ENCODE measurements at regions of chr6 and their contacts with region 1.

Region 1: DNA sequence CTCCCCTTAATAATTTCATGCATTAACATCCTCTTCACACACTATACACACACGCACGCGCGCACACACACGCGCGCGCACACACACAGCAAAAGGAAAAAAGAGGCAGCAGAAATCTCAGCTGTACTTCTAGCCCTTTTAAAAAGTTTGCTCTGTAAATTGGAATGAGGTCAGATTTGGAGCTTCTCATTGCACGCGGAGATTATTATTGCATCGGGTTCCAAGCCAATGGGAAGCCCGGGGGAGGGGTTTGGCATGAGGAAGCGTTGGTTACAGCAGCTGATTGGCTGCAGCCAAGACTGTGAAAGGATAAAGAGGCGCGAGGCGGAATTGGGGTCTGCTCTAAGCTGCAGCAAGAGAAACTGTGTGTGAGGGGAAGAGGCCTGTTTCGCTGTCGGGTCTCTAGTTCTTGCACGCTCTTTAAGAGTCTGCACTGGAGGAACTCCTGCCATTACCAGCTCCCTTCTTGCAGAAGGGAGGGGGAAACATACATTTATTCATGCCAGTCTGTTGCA is at the start of gene SOX4:
- DNase-seq: peak; percentile 95 to 97
- H3K4me3 ChIP-seq: peak within 1 kb of the TSS; percentile 99
- H3K4me3 Mint-ChIP-seq: peak within 1 kb of the TSS; percentile 20
- H3K27ac Mint-ChIP-seq: no peak within 1 kb of the TSS
- H3K4me1 ChIP-seq: peaks cover 9% of the 10 kb centered on the region
- H3K4me1 Mint-ChIP-seq: peaks cover 6% of the 10 kb centered on the region
- H3K27me3 ChIP-seq: no peaks in the 10 kb centered on the region
- H3K27me3 Mint-ChIP-seq: no peaks in the 10 kb centered on the region
- CTCF ChIP-seq: no peak
- total RNA-seq, gene SOX4: 76.8 and 77.3 TPM in 2 replicates

Region 2: GRCh38 chr6:20939161-20939775 is 654.2 kb before region 1 on chr6:
- CTCF ChIA-PET with region 1: no interaction called
- POLR2A ChIA-PET with region 1: no interaction called
- intact Hi-C with region 1: loop called (anchors 5 kb)
- DNase-seq: no peak
- H3K4me3 ChIP-seq: no peak overlapping the region
- H3K4me3 Mint-ChIP-seq: no peak overlapping the region
- H3K27ac Mint-ChIP-seq: no peak overlapping the region
- H3K4me1 ChIP-seq: no peaks in the 10 kb centered on the region
- H3K4me1 Mint-ChIP-seq: peaks cover 8% of the 10 kb centered on the region
- H3K27me3 ChIP-seq: no peaks in the 10 kb centered on the region
- H3K27me3 Mint-ChIP-seq: no peaks in the 10 kb centered on the region
- CTCF ChIP-seq: no peak

Region 3: GRCh38 chr6:21360341-21360770 is 233.1 kb before region 1 on chr6:
- CTCF ChIA-PET with region 1: no interaction called
- POLR2A ChIA-PET with region 1: interaction called, 4 read pairs
- intact Hi-C with region 1: loop called (anchors 1 kb)
- DNase-seq: peak; percentile 70 to 81
- H3K4me3 ChIP-seq: no peak overlapping the region
- H3K4me3 Mint-ChIP-seq: peak overlapping the region; percentile 19
- H3K27ac Mint-ChIP-seq: no peak overlapping the region
- H3K4me1 ChIP-seq: peaks cover 23% of the 10 kb centered on the region
- H3K4me1 Mint-ChIP-seq: peaks cover 31% of the 10 kb centered on the region
- H3K27me3 ChIP-seq: no peaks in the 10 kb centered on the region
- H3K27me3 Mint-ChIP-seq: no peaks in the 10 kb centered on the region
- CTCF ChIP-seq: peak in 1 of 2 experiments; percentile 7

Region 4: DNA sequence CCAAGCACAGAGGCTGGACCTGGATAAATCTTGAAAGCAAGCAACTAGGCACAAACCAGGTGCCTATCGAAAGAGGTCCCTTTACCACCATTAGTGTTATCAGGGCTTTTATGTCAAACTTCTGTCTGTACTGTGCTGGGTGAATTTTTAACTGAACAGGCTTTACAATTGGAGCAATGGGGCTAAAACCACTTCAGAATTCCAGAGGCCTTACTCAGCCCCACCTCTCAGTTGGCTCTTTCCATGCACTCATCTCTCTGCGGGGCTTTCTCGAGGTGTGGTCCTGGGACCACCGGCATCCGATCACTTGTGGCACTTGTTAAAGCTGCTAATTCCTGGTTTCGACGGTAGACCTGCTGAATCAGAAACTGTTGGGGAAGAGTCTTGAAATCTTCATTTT is 232.6 kb after region 1 on chr6:
- CTCF ChIA-PET with region 1: interaction called, 3 read pairs
- POLR2A ChIA-PET with region 1: interaction called, 4 read pairs
- intact Hi-C with region 1: loop called (anchors 5 kb)
- DNase-seq: peak; percentile 59 to 65
- H3K4me3 ChIP-seq: no peak overlapping the region
- H3K4me3 Mint-ChIP-seq: peak overlapping the region; percentile 72
- H3K27ac Mint-ChIP-seq: peak overlapping the region; percentile 76
- H3K4me1 ChIP-seq: peaks cover 54% of the 10 kb centered on the region
- H3K4me1 Mint-ChIP-seq: peaks cover 40% of the 10 kb centered on the region
- H3K27me3 ChIP-seq: no peaks in the 10 kb centered on the region
- H3K27me3 Mint-ChIP-seq: no peaks in the 10 kb centered on the region
- CTCF ChIP-seq: no peak

Region 5: GRCh38 chr6:22248513-22249308 is 655.2 kb after region 1 on chr6:
- CTCF ChIA-PET with region 1: interaction called, 4 read pairs
- POLR2A ChIA-PET with region 1: no interaction called
- intact Hi-C with region 1: loop called (anchors 10 kb)
- DNase-seq: peak; percentile 48 to 65
- H3K4me3 ChIP-seq: no peak overlapping the region
- H3K4me3 Mint-ChIP-seq: no peak overlapping the region
- H3K27ac Mint-ChIP-seq: peak overlapping the region; percentile 77
- H3K4me1 ChIP-seq: peaks cover 46% of the 10 kb centered on the region
- H3K4me1 Mint-ChIP-seq: peaks cover 31% of the 10 kb centered on the region
- H3K27me3 ChIP-seq: no peaks in the 10 kb centered on the region
- H3K27me3 Mint-ChIP-seq: no peaks in the 10 kb centered on the region
- CTCF ChIP-seq: no peak

Region 6: GRCh38 chr6:22828179-22829062 is 1235.0 kb after region 1 on chr6:
- CTCF ChIA-PET with region 1: no interaction called
- POLR2A ChIA-PET with region 1: no interaction called
- intact Hi-C with region 1: loop called (anchors 5 kb)
- DNase-seq: peak; percentile 62 to 65
- H3K4me3 ChIP-seq: no peak overlapping the region
- H3K4me3 Mint-ChIP-seq: peak overlapping the region; percentile 70
- H3K27ac Mint-ChIP-seq: peak overlapping the region; percentile 89
- H3K4me1 ChIP-seq: peaks cover 32% of the 10 kb centered on the region
- H3K4me1 Mint-ChIP-seq: peaks cover 43% of the 10 kb centered on the region
- H3K27me3 ChIP-seq: no peaks in the 10 kb centered on the region
- H3K27me3 Mint-ChIP-seq: no peaks in the 10 kb centered on the region
- CTCF ChIP-seq: peak; percentile 64 to 67